Right lobe of liver (tissue), 6 donors: ENCODE measurements at regions of chr1 and their contacts with region 1.

Region 1: GRCh38 chr1:109263597-109264398 is 14.5 kb downstream of the CELSR2 start:
- DNase-seq: peak; percentile 94 to 97 (median 96)
- ATAC-seq: peak; percentile 98 to 100 (median 99)
- H3K4me3 ChIP-seq: no peak overlapping the region
- H3K27ac ChIP-seq: no peak overlapping the region
- H3K4me1 ChIP-seq: no peaks in the 10 kb centered on the region
- H3K27me3 ChIP-seq: no peaks in the 10 kb centered on the region
- CTCF ChIP-seq: peak; percentile 95 to 100 (median 98)
- POLR2A ChIP-seq: no peak

Region 2: DNA sequence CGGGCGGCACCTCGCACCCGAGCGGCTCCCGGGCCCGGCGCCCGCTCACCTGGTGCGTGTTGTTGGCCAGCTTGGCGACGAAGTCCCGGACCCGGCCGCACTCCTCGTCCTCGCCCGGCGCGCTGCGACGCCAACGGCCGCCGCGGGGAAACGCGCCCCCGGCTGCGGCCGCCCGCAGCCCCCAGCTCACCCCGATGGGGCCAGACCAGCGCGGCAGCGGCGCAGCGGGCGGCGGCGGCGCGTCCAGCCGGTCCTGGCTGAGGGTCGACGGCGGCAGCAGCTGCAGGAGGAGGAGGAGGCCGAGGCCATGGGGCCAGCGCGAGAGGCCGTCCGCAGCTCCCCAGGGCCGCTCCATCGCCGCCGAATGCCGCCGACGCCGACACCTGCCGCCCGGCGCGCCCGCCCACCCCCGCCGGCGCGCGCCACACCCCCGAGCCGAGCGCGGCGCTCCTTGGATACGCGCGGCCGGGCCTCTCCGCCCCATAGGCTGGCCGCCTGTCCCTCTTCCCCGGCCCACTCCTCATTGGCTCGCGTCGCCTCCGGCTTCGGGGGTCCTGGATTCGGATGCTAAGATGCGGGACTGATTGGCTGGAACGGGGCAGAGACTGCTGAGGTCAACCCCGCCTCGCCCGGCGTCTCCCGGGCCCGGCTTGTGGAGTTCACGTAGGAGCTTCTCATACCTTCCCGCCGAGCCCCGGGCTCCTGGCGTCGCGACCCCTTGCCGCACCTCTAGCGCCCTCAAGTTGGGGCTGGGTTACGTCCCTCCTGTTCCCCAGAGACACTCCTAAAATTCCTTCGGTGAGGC is 133.9 kb after region 1 on chr1 and contains the start of gene SORT1:
- intact Hi-C with region 1: loop called (anchors 5 kb)
- DNase-seq: peak; percentile 74 to 82 (median 79)
- ATAC-seq: peak; percentile 86 to 94 (median 88)
- H3K4me3 ChIP-seq: peak within 1 kb of the TSS; percentile 39 to 62 (median 39)
- H3K27ac ChIP-seq: peak within 1 kb of the TSS in 1 of 3 donors; percentile 59
- H3K4me1 ChIP-seq: peaks cover 0 to 34% (median 6%) of the 10 kb centered on the region in 4 donors
- H3K27me3 ChIP-seq: no peaks in the 10 kb centered on the region
- CTCF ChIP-seq: no peak
- POLR2A ChIP-seq: peak; percentile 78
- total RNA-seq, gene SORT1: 3.2 to 30.3 (median 13.7) TPM

Region 3: GRCh38 chr1:109404838-109405237 is 141.0 kb after region 1 on chr1:
- intact Hi-C with region 1: loop called in 1 of 2 experiments (anchors 5 kb)
- DNase-seq: no peak
- ATAC-seq: peak in 1 of 4 donors; percentile 17
- H3K4me3 ChIP-seq: no peak overlapping the region
- H3K27ac ChIP-seq: no peak overlapping the region
- H3K4me1 ChIP-seq: no peaks in the 10 kb centered on the region
- H3K27me3 ChIP-seq: no peaks in the 10 kb centered on the region
- CTCF ChIP-seq: no peak
- POLR2A ChIP-seq: no peak

Region 4: DNA sequence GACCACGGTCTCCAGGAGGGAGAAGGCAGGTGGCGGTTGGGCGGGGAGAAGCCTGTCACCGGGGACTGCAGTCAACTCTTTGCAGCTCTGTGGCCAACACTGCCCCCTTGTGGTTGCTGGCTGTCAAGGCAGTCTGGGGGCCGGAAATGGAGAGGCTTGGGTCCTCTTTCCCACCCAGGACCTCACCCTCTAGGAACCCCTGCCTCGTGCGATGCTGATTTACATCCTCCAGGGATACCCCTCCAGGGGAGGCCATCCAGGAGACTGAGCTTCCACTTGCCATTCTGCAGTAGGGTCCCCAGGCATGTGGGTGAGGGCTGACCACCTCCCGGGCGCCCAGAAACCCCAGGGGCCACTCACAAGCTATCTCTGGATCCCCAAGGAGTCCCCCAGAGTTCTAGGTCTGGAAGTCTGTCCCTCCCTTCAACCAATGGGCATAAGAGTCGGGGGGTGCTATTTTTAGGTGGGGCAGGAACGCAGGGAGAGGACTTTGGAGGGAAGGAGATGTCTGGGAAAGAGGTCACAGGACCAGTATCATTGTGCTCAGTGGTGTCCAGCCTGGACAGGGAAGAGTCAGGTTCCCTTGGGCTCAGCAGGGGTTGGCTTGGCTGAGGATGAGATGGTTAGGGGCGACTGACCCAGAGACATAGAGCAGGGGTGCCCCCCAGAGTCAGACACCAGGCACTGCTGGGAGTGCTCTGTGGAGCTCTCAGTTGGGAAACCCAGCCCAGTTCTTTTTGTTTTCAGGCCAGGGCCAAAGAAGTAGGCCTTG is 268.8 kb after region 1 on chr1:
- intact Hi-C with region 1: loop called in 1 of 2 experiments (anchors 5 kb)
- DNase-seq: peak; percentile 80 to 86 (median 81)
- ATAC-seq: peak; percentile 84 to 94 (median 92)
- H3K4me3 ChIP-seq: no peak overlapping the region
- H3K27ac ChIP-seq: no peak overlapping the region
- H3K4me1 ChIP-seq: peaks cover 0 to 8% (median 0%) of the 10 kb centered on the region in 4 donors
- H3K27me3 ChIP-seq: no peaks in the 10 kb centered on the region
- CTCF ChIP-seq: peak; percentile 86 to 97 (median 90)
- POLR2A ChIP-seq: no peak